ENCODE measurements at regions of chr1 and their contacts with region 1.

Region 1: GRCh38 chr1:185566995-185567394 is 167.2 kb upstream of the HMCN1 start:
- DNase-seq: peak; percentile 68
- ATAC-seq: peak; percentile 65
- H3K4me3 Mint-ChIP-seq: no peak overlapping the region
- H3K27ac Mint-ChIP-seq: peak overlapping the region; percentile 86
- H3K4me1 Mint-ChIP-seq: peaks cover 59% of the 10 kb centered on the region
- H3K27me3 Mint-ChIP-seq: no peaks in the 10 kb centered on the region
- CTCF ChIP-seq: no peak

Region 2: GRCh38 chr1:185439727-185440415 is 127.1 kb before region 1 on chr1:
- CTCF ChIA-PET with region 1: interaction called, 4 read pairs
- POLR2A ChIA-PET with region 1: no interaction called
- intact Hi-C with region 1: loop called (anchors 5 kb)
- DNase-seq: peak; percentile 77
- ATAC-seq: peak; percentile 87
- H3K4me3 Mint-ChIP-seq: no peak overlapping the region
- H3K27ac Mint-ChIP-seq: no peak overlapping the region
- H3K4me1 Mint-ChIP-seq: peaks cover 16% of the 10 kb centered on the region
- H3K27me3 Mint-ChIP-seq: no peaks in the 10 kb centered on the region
- CTCF ChIP-seq: no peak

Region 3: GRCh38 chr1:185488808-185489207 is 78.2 kb before region 1 on chr1:
- CTCF ChIA-PET with region 1: no interaction called
- POLR2A ChIA-PET with region 1: no interaction called
- intact Hi-C with region 1: no loop called
- DNase-seq: no peak
- ATAC-seq: no peak
- H3K4me3 Mint-ChIP-seq: no peak overlapping the region
- H3K27ac Mint-ChIP-seq: no peak overlapping the region
- H3K4me1 Mint-ChIP-seq: no peaks in the 10 kb centered on the region
- H3K27me3 Mint-ChIP-seq: no peaks in the 10 kb centered on the region
- CTCF ChIP-seq: no peak

Region 4: DNA sequence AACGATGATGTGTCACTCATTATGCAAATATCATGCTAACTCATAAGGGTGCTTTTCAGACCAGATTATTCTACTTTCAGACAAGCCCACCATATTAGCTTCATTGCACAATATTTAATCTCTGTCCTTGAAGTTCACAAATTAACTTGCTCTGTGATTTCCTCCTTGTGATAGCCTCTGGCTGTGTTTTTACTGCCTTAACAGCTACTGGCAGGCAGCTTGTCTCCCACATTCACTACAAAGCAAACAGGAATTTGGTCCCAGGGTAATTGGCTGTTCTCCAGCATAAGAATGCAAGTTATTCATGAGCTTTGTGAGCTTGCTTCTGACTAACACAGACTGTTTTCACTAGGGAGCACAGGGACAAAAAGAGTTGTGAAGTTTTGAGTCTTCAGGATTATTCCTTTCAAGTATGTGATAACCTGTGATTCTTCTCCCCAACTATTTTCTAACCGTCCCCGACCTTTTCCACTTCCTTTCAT is 79.2 kb after region 1 on chr1:
- CTCF ChIA-PET with region 1: no interaction called
- POLR2A ChIA-PET with region 1: no interaction called
- intact Hi-C with region 1: no loop called
- DNase-seq: no peak
- ATAC-seq: peak; percentile 43
- H3K4me3 Mint-ChIP-seq: no peak overlapping the region
- H3K27ac Mint-ChIP-seq: no peak overlapping the region
- H3K4me1 Mint-ChIP-seq: peaks cover 33% of the 10 kb centered on the region
- H3K27me3 Mint-ChIP-seq: no peaks in the 10 kb centered on the region
- CTCF ChIP-seq: no peak

Measured in activated CD8-positive, alpha-beta T cell treated with anti-CD3 and anti-CD28 coated beads for 36 hours (primary cell).